ENCODE measurements at regions of chr6 and their contacts with region 1.

Region 1: DNA sequence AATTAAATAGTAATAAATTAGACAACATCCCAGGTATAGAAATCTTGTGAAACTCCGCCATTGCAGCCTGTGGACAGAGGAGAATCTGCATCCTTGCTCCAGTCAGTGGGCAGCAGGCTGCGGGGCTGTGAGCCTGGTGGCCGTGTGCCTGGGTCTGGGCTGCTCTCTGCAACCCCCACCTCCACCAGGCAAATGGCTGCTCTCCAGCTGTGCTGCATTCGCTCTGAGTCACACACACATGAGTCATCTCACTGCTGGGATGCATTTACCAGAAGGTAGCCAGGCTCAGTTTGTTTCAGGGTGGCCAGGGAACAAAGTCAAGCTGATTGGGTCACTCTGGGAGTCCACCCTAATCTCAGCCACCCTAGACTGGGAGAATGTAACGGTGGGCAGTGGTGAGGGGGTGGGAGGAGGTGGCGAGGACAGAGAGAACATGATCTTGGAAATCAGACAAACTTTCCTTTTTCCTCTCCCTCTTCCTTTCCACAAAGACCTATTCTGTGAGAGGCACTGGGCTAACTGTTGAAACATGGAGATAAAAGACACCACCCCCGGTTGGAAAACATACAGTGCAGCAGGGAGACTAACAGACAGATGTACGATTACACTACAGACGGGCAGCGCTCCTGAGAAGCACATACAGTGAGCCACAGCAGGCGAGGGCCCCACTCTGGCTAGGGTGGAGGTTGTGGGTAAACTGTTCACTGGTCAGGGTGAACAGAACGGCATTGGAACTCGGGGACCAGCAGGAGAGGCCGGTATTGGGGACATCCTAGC is 59.2 kb downstream of the TRAM2 start:
- DNase-seq: peak; percentile 68
- H3K4me3 Mint-ChIP-seq: no peak overlapping the region
- H3K27ac Mint-ChIP-seq: peak overlapping the region; percentile 27
- H3K4me1 Mint-ChIP-seq: peaks cover 36% of the 10 kb centered on the region
- H3K27me3 Mint-ChIP-seq: no peaks in the 10 kb centered on the region

Region 2: DNA sequence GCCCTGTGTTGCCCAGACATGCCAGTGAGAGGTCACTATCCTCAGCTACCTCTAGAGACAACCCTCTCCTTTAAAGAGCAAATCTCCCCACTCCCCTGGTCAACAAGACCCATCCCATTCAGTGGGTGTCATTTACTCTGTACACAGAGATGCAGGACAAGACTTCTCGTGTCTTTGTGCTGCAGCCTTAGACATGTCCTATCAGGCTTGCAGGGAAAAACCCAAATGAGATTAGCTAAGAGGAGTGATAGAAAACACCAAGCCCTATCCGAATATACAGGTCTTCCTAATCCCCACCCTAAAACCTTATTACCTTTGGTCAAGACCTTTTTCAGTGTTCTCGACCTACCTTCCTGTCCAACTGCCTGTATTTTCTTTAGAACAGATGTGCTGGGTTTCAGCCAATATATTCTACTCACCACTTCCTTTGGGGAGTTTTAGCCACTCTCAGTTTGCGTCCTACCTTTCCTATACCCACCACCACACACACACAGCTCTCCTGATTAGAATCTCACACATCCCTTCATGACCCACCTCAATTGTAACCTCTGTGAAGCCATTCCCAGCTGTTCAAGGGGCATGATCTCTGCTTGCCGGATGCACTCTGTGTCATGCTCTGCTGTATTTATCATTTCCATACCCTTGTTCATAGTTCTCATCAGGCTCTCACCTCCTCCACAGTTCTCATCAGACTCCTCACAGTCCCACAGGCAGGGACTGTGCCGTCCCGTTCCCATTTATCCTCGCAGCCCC is 19.5 kb after region 1 on chr6:
- intact Hi-C with region 1: loop called (anchors 2 kb)
- DNase-seq: peak; percentile 63
- H3K4me3 Mint-ChIP-seq: peak overlapping the region; percentile 7
- H3K27ac Mint-ChIP-seq: peak overlapping the region; percentile 36
- H3K4me1 Mint-ChIP-seq: peaks cover 34% of the 10 kb centered on the region
- H3K27me3 Mint-ChIP-seq: no peaks in the 10 kb centered on the region

Region 3: GRCh38 chr6:52577022-52577777 is 59.5 kb after region 1 on chr6 and contains the start of gene TRAM2:
- intact Hi-C with region 1: loop called (anchors 5 kb)
- DNase-seq: peak; percentile 94
- H3K4me3 Mint-ChIP-seq: peak within 1 kb of the TSS; percentile 81
- H3K27ac Mint-ChIP-seq: peak within 1 kb of the TSS; percentile 71
- H3K4me1 Mint-ChIP-seq: peaks cover 30% of the 10 kb centered on the region
- H3K27me3 Mint-ChIP-seq: peaks cover 13% of the 10 kb centered on the region
- total RNA-seq, gene TRAM2: 2.6 TPM in 2 replicates